ENCODE measurements at regions of chr6 and their contacts with region 1.

Region 1: DNA sequence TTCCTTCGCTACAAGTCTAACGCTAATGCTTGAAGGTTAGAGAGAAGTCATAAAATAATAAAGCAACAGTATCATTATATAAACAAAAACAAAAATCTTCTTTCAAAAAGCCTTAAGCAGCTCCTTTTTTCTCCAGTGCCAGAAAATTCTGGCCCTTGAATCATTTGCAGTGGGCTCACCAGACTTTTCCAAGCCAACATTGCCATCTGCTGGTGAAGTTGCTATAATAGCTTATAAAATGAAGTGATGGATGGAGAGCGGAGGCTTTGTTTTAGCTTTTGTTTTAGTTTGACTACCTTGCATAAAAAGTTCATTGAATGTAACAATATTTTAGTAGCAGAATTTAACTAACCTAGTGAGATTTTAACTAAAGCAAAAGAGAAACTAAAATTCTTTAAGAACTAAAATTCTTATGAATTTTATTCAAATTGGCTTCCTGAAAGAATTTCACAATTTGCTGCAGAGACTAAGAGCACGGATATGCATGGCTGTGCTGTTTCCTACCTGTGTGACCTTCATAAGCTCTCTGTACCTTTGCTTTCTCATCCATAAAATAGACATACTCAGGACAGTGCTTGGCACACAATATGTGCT is 44.8 kb upstream of the SLC2A12 start:
- DNase-seq: peak; percentile 27 to 81 (median 54)
- ATAC-seq: peak; percentile 52
- H3K4me3 ChIP-seq: no peak overlapping the region
- H3K4me3 Mint-ChIP-seq: no peak overlapping the region
- H3K27ac ChIP-seq: no peak overlapping the region
- H3K27ac Mint-ChIP-seq: no peak overlapping the region
- H3K4me1 ChIP-seq: no peaks in the 10 kb centered on the region
- H3K4me1 Mint-ChIP-seq: no peaks in the 10 kb centered on the region
- H3K27me3 ChIP-seq: peaks cover 0 to 10% of the 10 kb centered on the region in 2 experiments
- H3K27me3 Mint-ChIP-seq: peaks cover 28% of the 10 kb centered on the region
- CTCF ChIP-seq: peak; percentile 89

Region 2: DNA sequence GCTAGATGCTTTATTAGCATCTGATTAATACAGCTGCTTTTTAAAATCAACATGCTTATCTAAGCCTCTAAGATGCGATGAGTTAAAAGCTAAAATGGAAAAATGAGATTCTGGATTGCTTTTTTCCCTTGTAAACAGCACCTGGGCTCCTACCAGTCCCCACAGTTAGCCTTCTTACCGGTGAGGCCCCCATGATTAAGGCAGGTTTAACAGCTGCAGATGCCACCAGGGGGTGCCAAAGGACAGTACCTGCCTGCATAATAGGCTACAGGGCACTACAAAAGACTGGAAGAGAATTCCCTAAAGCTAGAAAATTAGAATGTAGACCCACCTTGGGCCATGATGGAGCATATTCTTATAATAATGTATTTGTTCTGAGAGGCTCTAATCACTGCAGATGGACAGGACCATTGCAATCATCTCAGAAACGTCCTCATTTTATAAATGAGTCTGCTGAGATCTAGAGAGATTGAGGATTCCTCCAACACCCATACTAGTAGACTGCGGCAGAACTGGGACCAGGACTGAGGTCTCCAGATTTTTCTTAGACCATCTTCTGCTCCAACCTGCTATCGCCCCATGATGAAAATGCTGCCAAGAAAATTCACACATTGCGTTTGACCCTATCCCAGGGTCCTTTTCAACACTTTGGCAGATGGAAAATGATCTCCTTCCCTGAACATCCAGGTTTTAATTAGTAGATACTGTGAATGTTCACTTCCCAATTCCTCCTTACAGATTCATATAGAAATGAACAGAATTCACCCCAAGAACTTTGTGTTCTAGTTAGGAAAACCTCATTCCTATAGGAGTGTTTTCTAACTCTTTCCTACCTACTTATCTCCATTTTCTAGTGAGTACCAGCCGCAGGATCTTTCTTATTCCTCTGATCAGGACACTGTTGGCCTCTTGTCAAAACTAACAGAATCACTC is 1134.0 kb before region 1 on chr6:
- CTCF ChIA-PET with region 1: no interaction called
- POLR2A ChIA-PET with region 1: no interaction called
- intact Hi-C with region 1: loop called in 1 of 2 experiments (anchors 5 kb)
- DNase-seq: peak; percentile 9 to 53 (median 34)
- ATAC-seq: peak; percentile 56
- H3K4me3 ChIP-seq: no peak overlapping the region
- H3K4me3 Mint-ChIP-seq: no peak overlapping the region
- H3K27ac ChIP-seq: no peak overlapping the region
- H3K27ac Mint-ChIP-seq: no peak overlapping the region
- H3K4me1 ChIP-seq: no peaks in the 10 kb centered on the region
- H3K4me1 Mint-ChIP-seq: no peaks in the 10 kb centered on the region
- H3K27me3 ChIP-seq: no peaks in the 10 kb centered on the region
- H3K27me3 Mint-ChIP-seq: peaks cover 38% of the 10 kb centered on the region
- CTCF ChIP-seq: peak; percentile 81

Region 3: GRCh38 chr6:133568970-133569889 is 528.0 kb before region 1 on chr6:
- CTCF ChIA-PET with region 1: no interaction called
- POLR2A ChIA-PET with region 1: no interaction called
- intact Hi-C with region 1: loop called (anchors 1 to 5 kb)
- DNase-seq: peak in 5 of 14 experiments; percentile 3 to 23 (median 7)
- ATAC-seq: peak; percentile 73
- H3K4me3 ChIP-seq: peak overlapping the region; percentile 22
- H3K4me3 Mint-ChIP-seq: peak overlapping the region; percentile 86
- H3K27ac ChIP-seq: no peak overlapping the region
- H3K27ac Mint-ChIP-seq: no peak overlapping the region
- H3K4me1 ChIP-seq: no peaks in the 10 kb centered on the region
- H3K4me1 Mint-ChIP-seq: peaks cover 11% of the 10 kb centered on the region
- H3K27me3 ChIP-seq: peaks cover 0 to 14% of the 10 kb centered on the region in 2 experiments
- H3K27me3 Mint-ChIP-seq: peaks cover 69% of the 10 kb centered on the region
- CTCF ChIP-seq: peak; percentile 77

Region 4: GRCh38 chr6:133837801-133838349 is 259.3 kb before region 1 on chr6:
- CTCF ChIA-PET with region 1: interaction called, 4 read pairs
- POLR2A ChIA-PET with region 1: no interaction called
- intact Hi-C with region 1: loop called (anchors 2 kb)
- DNase-seq: peak; percentile 18 to 72 (median 41)
- ATAC-seq: peak; percentile 68
- H3K4me3 ChIP-seq: peak overlapping the region; percentile 50
- H3K4me3 Mint-ChIP-seq: peak overlapping the region; percentile 44
- H3K27ac ChIP-seq: no peak overlapping the region
- H3K27ac Mint-ChIP-seq: no peak overlapping the region
- H3K4me1 ChIP-seq: peaks cover 4% of the 10 kb centered on the region
- H3K4me1 Mint-ChIP-seq: no peaks in the 10 kb centered on the region
- H3K27me3 ChIP-seq: peaks cover 4 to 11% of the 10 kb centered on the region in 2 experiments
- H3K27me3 Mint-ChIP-seq: peaks cover 62% of the 10 kb centered on the region
- CTCF ChIP-seq: peak; percentile 65

Region 5: GRCh38 chr6:133973109-133973971 is 123.9 kb before region 1 on chr6:
- CTCF ChIA-PET with region 1: interaction called, 5 read pairs
- POLR2A ChIA-PET with region 1: no interaction called
- intact Hi-C with region 1: loop called (anchors 1 to 10 kb)
- DNase-seq: peak in 3 of 14 experiments; percentile 54 to 74 (median 69)
- ATAC-seq: peak; percentile 84
- H3K4me3 ChIP-seq: no peak overlapping the region
- H3K4me3 Mint-ChIP-seq: no peak overlapping the region
- H3K27ac ChIP-seq: no peak overlapping the region
- H3K27ac Mint-ChIP-seq: peak overlapping the region; percentile 16
- H3K4me1 ChIP-seq: peaks cover 9% of the 10 kb centered on the region
- H3K4me1 Mint-ChIP-seq: peaks cover 58% of the 10 kb centered on the region
- H3K27me3 ChIP-seq: no peaks in the 10 kb centered on the region
- H3K27me3 Mint-ChIP-seq: no peaks in the 10 kb centered on the region
- CTCF ChIP-seq: peak; percentile 92